CD4-positive, alpha-beta T cell (primary cell): ENCODE measurements at regions of chr4 and their contacts with region 1.

Region 1: DNA sequence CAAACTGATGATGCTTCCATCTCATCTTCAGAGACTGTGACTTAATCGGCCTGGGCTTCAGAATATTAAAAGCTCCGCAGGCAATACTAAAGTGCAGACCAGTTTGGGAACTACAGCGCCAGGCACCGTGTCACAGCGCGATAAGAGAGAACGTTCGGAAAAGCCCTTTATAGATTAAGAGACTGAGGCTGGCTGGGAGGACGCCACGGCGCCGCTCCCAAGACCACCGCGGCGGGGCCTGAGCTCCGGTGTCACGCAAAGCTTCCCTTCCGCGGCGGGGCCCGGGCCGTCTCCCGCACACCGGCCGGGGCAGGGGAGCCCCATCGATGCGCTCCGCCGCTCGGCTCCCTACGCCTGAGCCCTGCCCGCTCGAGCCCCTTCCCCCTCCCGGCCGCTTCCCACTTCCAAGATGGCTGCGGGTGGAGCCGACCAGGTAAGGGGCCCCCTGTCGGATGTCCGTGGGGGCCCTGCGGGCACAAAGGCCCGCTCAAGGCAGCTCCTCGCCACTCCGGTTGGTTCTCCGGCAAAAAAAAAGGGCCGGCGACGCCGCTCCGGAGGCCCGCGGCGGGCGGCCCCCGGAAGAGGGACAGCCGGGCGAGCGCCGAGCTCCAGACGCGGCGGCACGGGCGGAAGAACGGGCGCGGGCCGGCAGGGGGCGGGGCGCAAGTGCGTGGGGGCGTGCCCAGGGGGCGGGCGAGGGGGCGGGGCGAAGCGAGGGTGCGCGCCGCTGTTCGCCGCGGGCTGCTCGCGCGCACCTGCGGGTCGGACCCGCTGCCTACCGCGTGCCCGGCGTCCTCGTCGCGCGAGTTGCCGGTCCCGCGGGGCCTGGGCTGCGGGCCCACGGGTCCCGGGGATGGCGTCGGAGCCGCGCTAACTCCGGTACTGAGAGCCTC is at the start of gene TBC1D14:
- DNase-seq: peak; percentile 77 to 93 (median 84)
- ATAC-seq: peak; percentile 88
- H3K4me3 ChIP-seq: peak within 1 kb of the TSS; percentile 91
- H3K4me3 Mint-ChIP-seq: peak within 1 kb of the TSS; percentile 96
- H3K27ac ChIP-seq: peak within 1 kb of the TSS; percentile 92 to 96
- H3K27ac Mint-ChIP-seq: peak within 1 kb of the TSS; percentile 90
- H3K4me1 ChIP-seq: peaks cover 61% of the 10 kb centered on the region
- H3K4me1 Mint-ChIP-seq: peaks cover 48% of the 10 kb centered on the region
- H3K27me3 ChIP-seq: no peaks in the 10 kb centered on the region
- H3K27me3 Mint-ChIP-seq: no peaks in the 10 kb centered on the region
- CTCF ChIP-seq: no peak
- total RNA-seq, gene TBC1D14: 31.2 to 34.1 TPM

Region 2: GRCh38 chr4:6898763-6899162 is 10.6 kb before region 1 on chr4:
- CTCF ChIA-PET with region 1: interaction called, 5 read pairs
- POLR2A ChIA-PET with region 1: interaction called, 26 read pairs
- intact Hi-C with region 1: no loop called
- DNase-seq: peak in 1 of 14 experiments; percentile 23
- ATAC-seq: peak; percentile 29
- H3K4me3 ChIP-seq: no peak overlapping the region
- H3K4me3 Mint-ChIP-seq: no peak overlapping the region
- H3K27ac ChIP-seq: peak overlapping the region in 1 of 2 donors; percentile 62
- H3K27ac Mint-ChIP-seq: peak overlapping the region; percentile 87
- H3K4me1 ChIP-seq: peaks cover 43% of the 10 kb centered on the region
- H3K4me1 Mint-ChIP-seq: peaks cover 28% of the 10 kb centered on the region
- H3K27me3 ChIP-seq: no peaks in the 10 kb centered on the region
- H3K27me3 Mint-ChIP-seq: no peaks in the 10 kb centered on the region
- CTCF ChIP-seq: no peak

Region 3: DNA sequence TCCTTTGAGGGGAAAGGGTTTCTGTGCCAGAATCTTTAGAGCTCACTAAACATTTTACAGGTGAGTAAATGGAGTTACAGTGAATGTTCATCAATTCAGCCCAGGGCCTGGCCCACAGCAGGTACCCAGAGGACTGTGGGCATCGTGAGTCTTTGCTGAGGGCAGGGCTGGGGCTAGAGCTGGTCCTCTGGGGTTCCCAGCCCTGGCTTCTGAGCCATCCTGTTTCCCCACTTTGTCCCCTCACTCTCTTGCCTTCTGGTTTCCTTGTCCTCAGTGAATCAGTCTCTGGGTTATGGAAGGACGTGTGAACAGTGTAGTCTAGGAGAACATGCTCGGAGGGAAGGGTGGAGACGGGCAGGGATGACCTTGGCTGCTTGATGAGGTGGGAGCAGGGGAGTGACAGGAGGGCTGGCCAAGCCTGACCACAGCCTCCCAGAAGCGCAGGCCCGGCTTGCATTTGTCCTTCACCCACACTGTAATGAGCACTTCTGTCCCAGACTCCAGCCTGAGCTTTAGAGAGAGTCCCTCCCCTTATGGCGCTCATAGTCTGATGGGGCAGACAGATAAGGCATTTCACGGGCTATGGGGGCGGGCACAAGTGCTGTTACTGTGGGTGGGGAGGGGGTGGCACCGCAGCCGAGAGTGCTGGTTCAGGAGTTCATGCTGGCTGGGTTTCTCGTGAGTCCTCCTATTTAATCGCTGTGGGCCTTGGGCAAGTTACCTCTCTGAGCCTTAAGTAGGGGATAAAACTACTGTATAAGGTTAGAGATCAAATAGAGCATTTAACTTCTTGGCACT is 17.6 kb after region 1 on chr4:
- CTCF ChIA-PET with region 1: no interaction called
- POLR2A ChIA-PET with region 1: interaction called, 18 read pairs
- intact Hi-C with region 1: loop called in 1 of 2 experiments (anchors 2 kb)
- DNase-seq: peak; percentile 42 to 85 (median 67)
- ATAC-seq: peak; percentile 97
- H3K4me3 ChIP-seq: peak overlapping the region; percentile 10
- H3K4me3 Mint-ChIP-seq: peak overlapping the region; percentile 83
- H3K27ac ChIP-seq: peak overlapping the region; percentile 28 to 57
- H3K27ac Mint-ChIP-seq: peak overlapping the region; percentile 92
- H3K4me1 ChIP-seq: peaks cover 79% of the 10 kb centered on the region
- H3K4me1 Mint-ChIP-seq: peaks cover 81% of the 10 kb centered on the region
- H3K27me3 ChIP-seq: no peaks in the 10 kb centered on the region
- H3K27me3 Mint-ChIP-seq: no peaks in the 10 kb centered on the region
- CTCF ChIP-seq: no peak

Region 4: DNA sequence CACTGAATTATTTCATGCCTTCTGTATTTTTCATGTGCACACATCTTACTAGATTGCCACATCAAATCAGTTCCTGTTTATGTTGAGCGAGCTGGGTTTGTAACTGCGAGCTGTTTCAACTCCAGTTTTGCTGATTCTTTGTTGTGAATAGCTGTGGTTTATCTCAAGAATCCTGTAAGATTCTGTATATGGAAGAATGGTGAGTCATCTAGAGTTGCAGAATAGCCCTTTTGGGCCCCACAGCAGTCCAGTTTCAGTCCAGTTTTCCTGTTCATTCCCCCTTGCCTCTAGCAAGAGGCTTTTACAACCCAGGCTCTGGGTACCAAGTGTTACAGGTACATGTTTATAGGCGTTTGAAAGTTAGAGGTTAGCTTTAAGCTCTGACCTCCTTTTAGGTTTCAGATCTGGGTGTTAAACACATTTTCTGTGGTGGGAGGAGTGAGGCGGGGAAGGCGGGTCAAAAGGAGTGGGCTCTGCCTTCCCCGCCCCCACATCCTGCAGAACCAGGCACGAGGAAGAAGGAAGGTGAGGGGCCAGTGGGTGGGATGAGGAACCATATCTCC is 33.0 kb after region 1 on chr4:
- CTCF ChIA-PET with region 1: interaction called, 8 read pairs
- POLR2A ChIA-PET with region 1: interaction called, 64 read pairs
- intact Hi-C with region 1: loop called (anchors 2 kb)
- DNase-seq: peak in 13 of 14 experiments; percentile 17 to 79 (median 36)
- ATAC-seq: peak; percentile 86
- H3K4me3 ChIP-seq: peak overlapping the region; percentile 40
- H3K4me3 Mint-ChIP-seq: peak overlapping the region; percentile 83
- H3K27ac ChIP-seq: peak overlapping the region; percentile 62 to 81
- H3K27ac Mint-ChIP-seq: peak overlapping the region; percentile 95
- H3K4me1 ChIP-seq: peaks cover 86% of the 10 kb centered on the region
- H3K4me1 Mint-ChIP-seq: peaks cover 73% of the 10 kb centered on the region
- H3K27me3 ChIP-seq: no peaks in the 10 kb centered on the region
- H3K27me3 Mint-ChIP-seq: no peaks in the 10 kb centered on the region
- CTCF ChIP-seq: no peak

Region 5: GRCh38 chr4:6974138-6974848 is 65.0 kb after region 1 on chr4:
- CTCF ChIA-PET with region 1: interaction called, 7 read pairs
- POLR2A ChIA-PET with region 1: interaction called, 3 read pairs
- intact Hi-C with region 1: loop called in 1 of 2 experiments (anchors 5 kb)
- DNase-seq: peak; percentile 56 to 89 (median 77)
- ATAC-seq: peak; percentile 98
- H3K4me3 ChIP-seq: no peak overlapping the region
- H3K4me3 Mint-ChIP-seq: no peak overlapping the region
- H3K27ac ChIP-seq: no peak overlapping the region
- H3K27ac Mint-ChIP-seq: peak overlapping the region; percentile 49
- H3K4me1 ChIP-seq: peaks cover 6% of the 10 kb centered on the region
- H3K4me1 Mint-ChIP-seq: peaks cover 15% of the 10 kb centered on the region
- H3K27me3 ChIP-seq: no peaks in the 10 kb centered on the region
- H3K27me3 Mint-ChIP-seq: no peaks in the 10 kb centered on the region
- CTCF ChIP-seq: peak; percentile 93

Region 6: GRCh38 chr4:7042697-7043464 is 133.6 kb after region 1 on chr4 and contains the start of gene TADA2B:
- CTCF ChIA-PET with region 1: interaction called, 5 read pairs
- POLR2A ChIA-PET with region 1: interaction called, 28 read pairs
- intact Hi-C with region 1: loop called in 1 of 2 experiments (anchors 1 kb)
- DNase-seq: peak; percentile 72 to 97 (median 89)
- ATAC-seq: peak; percentile 76
- H3K4me3 ChIP-seq: peak within 1 kb of the TSS; percentile 87
- H3K4me3 Mint-ChIP-seq: peak within 1 kb of the TSS; percentile 93
- H3K27ac ChIP-seq: peak within 1 kb of the TSS; percentile 44 to 81
- H3K27ac Mint-ChIP-seq: peak within 1 kb of the TSS; percentile 82
- H3K4me1 ChIP-seq: peaks cover 55% of the 10 kb centered on the region
- H3K4me1 Mint-ChIP-seq: peaks cover 57% of the 10 kb centered on the region
- H3K27me3 ChIP-seq: no peaks in the 10 kb centered on the region
- H3K27me3 Mint-ChIP-seq: no peaks in the 10 kb centered on the region
- CTCF ChIP-seq: peak; percentile 22
- total RNA-seq, gene TADA2B: 41.5 to 44.6 TPM